ENCODE measurements at regions of chr9 and their contacts with region 1.

Region 1: DNA sequence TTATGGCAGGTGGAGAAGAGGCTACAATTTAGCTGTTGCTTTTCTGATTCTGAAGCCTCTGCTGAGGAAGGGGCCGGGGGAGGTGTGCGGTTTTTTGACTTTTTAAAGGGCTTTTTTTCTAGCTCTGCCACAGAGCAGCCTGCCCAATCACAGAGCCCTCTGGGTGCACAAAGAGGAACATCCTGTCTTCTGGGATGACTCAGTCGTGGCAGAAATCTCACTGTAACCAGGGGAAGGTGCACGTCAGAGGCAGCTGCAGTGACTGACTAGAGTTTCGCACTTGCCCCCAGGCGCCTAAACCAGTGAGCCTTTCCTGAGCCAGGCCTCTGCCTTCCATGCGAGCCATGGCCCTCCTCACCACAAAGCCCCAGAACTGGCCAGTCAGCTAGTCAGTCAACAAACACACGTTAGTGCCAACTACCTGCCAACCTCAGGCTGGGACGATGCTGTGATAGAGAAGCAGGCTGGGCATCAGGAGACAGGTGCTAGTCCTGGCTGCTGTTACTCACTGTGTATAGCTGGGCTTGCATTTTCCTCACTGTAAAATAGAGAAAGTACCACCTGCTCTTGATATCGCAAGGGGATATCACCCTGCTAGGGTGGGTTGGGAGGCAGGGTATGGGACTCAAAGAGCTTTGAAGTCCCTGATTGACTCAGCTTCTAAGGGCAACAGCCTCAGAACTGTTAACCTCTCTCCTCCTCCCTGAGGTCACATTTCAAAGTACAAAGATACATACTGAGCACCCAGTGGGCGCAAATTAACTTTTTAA is 2.2 kb downstream of the AKNA start:
- DNase-seq: peak; percentile 92
- ATAC-seq: peak; percentile 83
- H3K4me3 ChIP-seq: peak overlapping the region; percentile 75 to 96 (median 89)
- H3K4me3 Mint-ChIP-seq: peak overlapping the region; percentile 97
- H3K27ac ChIP-seq: peak overlapping the region; percentile 87 to 93
- H3K27ac Mint-ChIP-seq: peak overlapping the region; percentile 93
- H3K4me1 ChIP-seq: peaks cover 65 to 81% of the 10 kb centered on the region in 2 donors
- H3K4me1 Mint-ChIP-seq: peaks cover 81% of the 10 kb centered on the region
- H3K27me3 ChIP-seq: no peaks in the 10 kb centered on the region
- H3K27me3 Mint-ChIP-seq: no peaks in the 10 kb centered on the region
- CTCF ChIP-seq: peak; percentile 8

Region 2: GRCh38 chr9:113943112-113944009 is 442.2 kb before region 1 on chr9:
- CTCF ChIA-PET with region 1: no interaction called
- POLR2A ChIA-PET with region 1: no interaction called
- intact Hi-C with region 1: no loop called
- DNase-seq: no peak
- ATAC-seq: no peak
- H3K4me3 ChIP-seq: no peak overlapping the region
- H3K4me3 Mint-ChIP-seq: no peak overlapping the region
- H3K27ac ChIP-seq: no peak overlapping the region
- H3K27ac Mint-ChIP-seq: no peak overlapping the region
- H3K4me1 ChIP-seq: no peaks in the 10 kb centered on the region
- H3K4me1 Mint-ChIP-seq: no peaks in the 10 kb centered on the region
- H3K27me3 ChIP-seq: no peaks in the 10 kb centered on the region
- H3K27me3 Mint-ChIP-seq: peaks cover 4% of the 10 kb centered on the region
- CTCF ChIP-seq: no peak

Region 3: GRCh38 chr9:114339130-114339908 is 46.3 kb before region 1 on chr9:
- CTCF ChIA-PET with region 1: interaction called, 23 read pairs
- POLR2A ChIA-PET with region 1: interaction called, 7 read pairs
- intact Hi-C with region 1: loop called (anchors 1 kb)
- DNase-seq: peak; percentile 74
- ATAC-seq: peak; percentile 68
- H3K4me3 ChIP-seq: no peak overlapping the region
- H3K4me3 Mint-ChIP-seq: no peak overlapping the region
- H3K27ac ChIP-seq: peak overlapping the region in 1 of 2 donors; percentile 71
- H3K27ac Mint-ChIP-seq: peak overlapping the region; percentile 80
- H3K4me1 ChIP-seq: peaks cover 0 to 17% of the 10 kb centered on the region in 2 donors
- H3K4me1 Mint-ChIP-seq: peaks cover 37% of the 10 kb centered on the region
- H3K27me3 ChIP-seq: no peaks in the 10 kb centered on the region
- H3K27me3 Mint-ChIP-seq: no peaks in the 10 kb centered on the region
- CTCF ChIP-seq: peak; percentile 91

Region 4: GRCh38 chr9:114348906-114349482 is 36.6 kb before region 1 on chr9:
- CTCF ChIA-PET with region 1: interaction called, 41 read pairs
- POLR2A ChIA-PET with region 1: interaction called, 8 read pairs
- intact Hi-C with region 1: loop called (anchors 1 kb)
- DNase-seq: peak; percentile 91
- ATAC-seq: peak; percentile 94
- H3K4me3 ChIP-seq: no peak overlapping the region
- H3K4me3 Mint-ChIP-seq: peak overlapping the region; percentile 83
- H3K27ac ChIP-seq: peak overlapping the region; percentile 68 to 80
- H3K27ac Mint-ChIP-seq: peak overlapping the region; percentile 97
- H3K4me1 ChIP-seq: peaks cover 26 to 36% of the 10 kb centered on the region in 2 donors
- H3K4me1 Mint-ChIP-seq: peaks cover 44% of the 10 kb centered on the region
- H3K27me3 ChIP-seq: no peaks in the 10 kb centered on the region
- H3K27me3 Mint-ChIP-seq: no peaks in the 10 kb centered on the region
- CTCF ChIP-seq: no peak

Region 5: DNA sequence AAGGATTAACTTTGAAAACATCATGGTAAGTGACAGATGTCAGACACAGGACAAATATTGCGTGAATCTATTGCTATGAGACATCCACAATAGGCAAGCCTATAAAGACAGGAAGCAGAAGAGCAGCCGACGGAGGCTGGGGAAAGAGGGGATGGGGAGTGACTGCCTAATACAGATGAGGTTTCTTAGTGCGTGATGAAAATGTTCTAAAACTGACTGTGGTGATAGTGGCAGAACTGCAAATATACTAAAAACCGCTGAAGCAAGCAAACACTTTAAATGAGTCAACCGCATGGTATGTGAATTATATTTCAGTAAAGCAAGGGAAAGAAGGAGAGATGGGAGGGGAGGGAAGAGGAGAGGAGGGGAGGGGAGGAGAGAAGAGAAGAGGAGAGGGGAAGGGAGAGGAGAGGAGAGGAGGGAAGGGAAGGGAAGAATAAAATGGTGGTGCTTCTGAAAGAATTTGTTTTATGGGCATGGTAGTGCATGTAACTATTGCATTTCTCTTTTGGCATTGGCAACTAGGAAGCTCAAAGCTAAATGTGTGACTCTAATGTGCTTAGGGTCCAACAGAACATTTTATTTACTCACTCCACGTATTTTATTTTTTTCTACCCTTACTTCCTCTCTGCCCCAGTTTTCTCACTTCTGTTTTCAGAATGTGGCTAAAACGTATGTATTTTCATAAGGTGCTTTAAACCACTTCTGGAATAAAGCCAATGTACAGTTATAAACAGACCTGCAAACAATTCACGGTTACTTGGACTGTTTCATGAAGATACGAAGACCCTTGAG is 19.1 kb before region 1 on chr9:
- CTCF ChIA-PET with region 1: interaction called, 85 read pairs
- POLR2A ChIA-PET with region 1: interaction called, 135 read pairs
- intact Hi-C with region 1: loop called (anchors 1 kb)
- DNase-seq: peak; percentile 74
- ATAC-seq: peak; percentile 50
- H3K4me3 ChIP-seq: peak overlapping the region in 3 of 5 experiments; percentile 9 to 45 (median 23)
- H3K4me3 Mint-ChIP-seq: peak overlapping the region; percentile 71
- H3K27ac ChIP-seq: peak overlapping the region; percentile 80
- H3K27ac Mint-ChIP-seq: peak overlapping the region; percentile 90
- H3K4me1 ChIP-seq: peaks cover 88 to 99% of the 10 kb centered on the region in 2 donors
- H3K4me1 Mint-ChIP-seq: peaks cover 84% of the 10 kb centered on the region
- H3K27me3 ChIP-seq: no peaks in the 10 kb centered on the region
- H3K27me3 Mint-ChIP-seq: no peaks in the 10 kb centered on the region
- CTCF ChIP-seq: no peak

Region 6: DNA sequence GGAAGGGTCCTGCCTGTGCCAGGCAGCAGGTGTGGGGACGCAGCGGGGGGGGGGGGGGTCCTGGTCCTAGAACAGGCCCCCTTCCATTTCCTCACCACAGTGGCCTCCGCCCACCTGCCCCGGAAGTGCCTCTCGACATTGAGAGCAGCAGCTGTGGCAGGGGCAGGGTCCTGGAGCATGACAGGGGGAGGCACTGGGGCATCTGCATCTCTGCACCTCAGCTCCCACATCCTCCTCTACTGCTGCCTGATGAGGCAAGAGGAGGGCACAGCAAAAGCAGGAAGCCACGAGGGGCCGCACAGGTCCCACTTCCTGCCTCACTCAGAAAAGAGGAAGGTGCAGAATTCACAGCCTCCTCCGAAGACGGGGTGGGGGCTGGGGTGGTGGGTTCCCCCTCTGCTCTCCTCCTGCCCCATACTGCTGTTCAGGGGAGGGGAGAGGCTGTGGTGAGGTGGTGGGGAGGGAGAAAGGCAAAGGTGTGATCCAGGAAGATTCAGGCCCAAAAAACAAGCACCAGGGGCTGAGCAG is 12.6 kb before region 1 on chr9:
- CTCF ChIA-PET with region 1: interaction called, 85 read pairs
- POLR2A ChIA-PET with region 1: interaction called, 135 read pairs
- intact Hi-C with region 1: loop called (anchors 1 kb)
- DNase-seq: peak; percentile 96
- ATAC-seq: peak; percentile 93
- H3K4me3 ChIP-seq: peak overlapping the region in 3 of 5 experiments; percentile 13 to 33 (median 19)
- H3K4me3 Mint-ChIP-seq: peak overlapping the region; percentile 79
- H3K27ac ChIP-seq: peak overlapping the region; percentile 92 to 95
- H3K27ac Mint-ChIP-seq: peak overlapping the region; percentile 97
- H3K4me1 ChIP-seq: peaks cover 86 to 96% of the 10 kb centered on the region in 2 donors
- H3K4me1 Mint-ChIP-seq: peaks cover 91% of the 10 kb centered on the region
- H3K27me3 ChIP-seq: no peaks in the 10 kb centered on the region
- H3K27me3 Mint-ChIP-seq: no peaks in the 10 kb centered on the region
- CTCF ChIP-seq: no peak